HCT116 (cell line): ENCODE measurements at regions of chr14 and their contacts with region 1.

Region 1: DNA sequence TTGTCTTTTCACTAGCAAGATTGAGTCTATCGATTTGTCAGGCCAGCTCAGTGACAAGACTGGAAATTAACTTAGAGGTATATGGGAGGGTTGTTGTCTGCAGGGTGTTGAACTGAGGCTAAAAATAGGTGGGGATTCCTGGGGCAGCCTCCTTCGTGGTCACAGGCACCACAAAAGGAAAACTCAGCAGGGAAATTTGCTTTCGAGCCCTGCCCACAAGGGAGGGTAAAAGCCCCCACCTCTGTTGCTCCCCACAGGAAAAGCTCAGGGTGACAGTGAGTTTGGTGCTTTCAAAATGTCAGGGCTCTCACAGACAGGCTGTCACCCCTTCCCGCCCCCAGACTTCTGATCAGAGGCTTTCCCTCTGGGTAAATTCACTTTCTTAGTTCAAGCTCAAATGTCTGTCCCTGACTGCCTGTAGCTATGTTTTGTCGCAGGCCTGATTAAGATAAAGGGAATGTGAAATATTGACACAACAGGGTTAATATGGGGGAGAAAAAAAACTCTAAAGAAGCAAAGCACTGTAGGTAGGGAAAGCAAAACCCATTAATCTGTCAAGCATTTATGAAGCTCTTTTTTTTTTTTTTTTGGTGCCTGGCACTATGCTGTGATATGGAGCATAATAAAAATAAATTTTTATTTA is 11.7 kb upstream of the NFKBIA start:
- DNase-seq: no peak
- ATAC-seq: no peak
- H3K4me3 ChIP-seq: no peak overlapping the region
- H3K27ac ChIP-seq: no peak overlapping the region
- H3K4me1 ChIP-seq: peaks cover 2 to 6% of the 10 kb centered on the region in 2 experiments; a peak in 1 of 4 replicates
- H3K27me3 ChIP-seq: no peaks in the 10 kb centered on the region
- CTCF ChIP-seq: no peak
- POLR2A ChIP-seq: no peak
- RAD21 ChIP-seq: no peak

Region 2: DNA sequence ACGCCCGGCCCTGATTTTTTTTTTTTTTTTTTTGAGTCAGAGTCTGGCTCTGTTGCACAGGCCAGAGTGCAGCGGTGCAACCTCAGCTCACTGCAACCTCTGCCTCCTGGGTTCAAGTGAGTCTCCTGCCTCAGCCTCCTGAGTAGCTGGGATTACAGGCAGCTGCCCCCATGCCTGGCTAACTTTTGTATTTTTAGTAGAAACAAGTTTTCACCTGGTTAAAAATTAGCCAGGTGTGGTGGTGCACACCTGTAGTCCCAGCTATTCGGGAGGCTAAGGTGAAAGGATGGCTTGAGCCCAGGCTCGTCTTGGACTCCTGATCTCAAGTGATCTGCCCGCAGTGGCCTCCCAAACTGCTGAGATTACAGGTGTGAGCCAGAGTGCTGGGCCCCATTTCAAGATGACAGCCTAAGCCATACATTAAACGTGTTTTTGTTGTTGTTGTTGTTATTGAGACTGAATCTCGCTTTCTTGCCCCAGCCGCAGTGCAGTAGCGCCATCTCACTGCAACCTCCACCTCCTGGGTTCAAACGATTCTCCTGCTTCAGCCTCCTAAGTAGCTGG is 834.0 kb before region 1 on chr14:
- CTCF ChIA-PET with region 1: no interaction called
- POLR2A ChIA-PET with region 1: no interaction called
- RAD21 ChIA-PET with region 1: no interaction called
- intact Hi-C with region 1: loop called (anchors 10 kb)
- DNase-seq: no peak
- ATAC-seq: no peak
- H3K4me3 ChIP-seq: no peak overlapping the region
- H3K27ac ChIP-seq: no peak overlapping the region
- H3K4me1 ChIP-seq: no peaks in the 10 kb centered on the region
- H3K27me3 ChIP-seq: no peaks in the 10 kb centered on the region
- CTCF ChIP-seq: no peak
- POLR2A ChIP-seq: no peak
- RAD21 ChIP-seq: no peak

Region 3: DNA sequence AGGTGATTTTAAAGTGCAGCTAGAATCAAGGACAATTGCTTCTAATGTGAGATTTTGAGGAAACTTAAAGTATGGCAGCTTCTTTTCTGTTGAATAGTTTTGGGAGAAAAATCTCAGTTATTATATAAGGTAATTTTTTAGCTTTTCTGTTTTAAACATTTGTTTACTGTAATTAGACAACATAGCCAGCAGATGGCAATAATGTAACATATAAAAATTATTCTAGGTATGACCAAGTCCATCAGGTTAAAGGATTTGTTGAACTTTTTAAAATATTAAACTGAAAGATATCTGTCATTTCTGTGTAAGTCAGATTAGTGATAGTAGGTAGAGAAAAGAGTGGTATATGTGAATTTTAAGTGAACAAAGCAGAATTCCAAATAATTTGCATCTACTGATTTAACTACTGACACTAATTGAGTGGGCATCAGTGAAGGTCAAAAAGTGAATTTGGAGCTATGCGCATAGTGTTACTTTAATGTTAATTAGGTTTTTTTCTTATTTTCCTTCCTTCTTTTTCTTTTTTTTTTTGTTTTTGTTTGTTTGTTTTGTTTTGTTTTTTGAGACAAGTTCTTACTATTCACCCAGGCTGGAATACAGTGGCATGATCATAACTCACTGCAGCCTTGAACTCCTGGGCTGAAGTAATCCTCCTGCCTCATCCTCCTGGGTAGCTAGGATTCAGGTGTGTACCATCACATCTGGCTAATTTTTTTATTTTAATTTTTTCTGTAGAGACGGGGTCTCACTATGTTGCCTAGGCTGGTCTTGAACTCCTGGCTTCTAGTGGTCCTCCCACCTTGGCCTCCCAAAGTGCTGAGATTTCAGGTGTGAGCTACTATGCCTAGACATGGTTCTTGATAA is 275.3 kb before region 1 on chr14:
- CTCF ChIA-PET with region 1: interaction called, 11 read pairs
- POLR2A ChIA-PET with region 1: no interaction called
- RAD21 ChIA-PET with region 1: interaction called, 3 to 4 read pairs
- intact Hi-C with region 1: no loop called
- DNase-seq: no peak
- ATAC-seq: no peak
- H3K4me3 ChIP-seq: no peak overlapping the region
- H3K27ac ChIP-seq: no peak overlapping the region
- H3K4me1 ChIP-seq: no peaks in the 10 kb centered on the region
- H3K27me3 ChIP-seq: no peaks in the 10 kb centered on the region
- CTCF ChIP-seq: peak in 2 of 3 experiments; percentile 39 to 46; a peak in 3 of 6 replicates
- POLR2A ChIP-seq: no peak
- RAD21 ChIP-seq: peak; percentile 60

Region 4: GRCh38 chr14:35687335-35687939 is 271.2 kb after region 1 on chr14:
- CTCF ChIA-PET with region 1: interaction called, 5 read pairs
- POLR2A ChIA-PET with region 1: no interaction called
- RAD21 ChIA-PET with region 1: no interaction called
- intact Hi-C with region 1: loop called (anchors 1 kb)
- DNase-seq: peak; percentile 26
- ATAC-seq: peak; percentile 81
- H3K4me3 ChIP-seq: no peak overlapping the region
- H3K27ac ChIP-seq: no peak overlapping the region
- H3K4me1 ChIP-seq: no peaks in the 10 kb centered on the region
- H3K27me3 ChIP-seq: no peaks in the 10 kb centered on the region
- CTCF ChIP-seq: peak; percentile 81 to 91 (median 83); a peak in 5 of 6 replicates
- POLR2A ChIP-seq: no peak
- RAD21 ChIP-seq: peak; percentile 90